ENCODE measurements at regions of chr4 and their contacts with region 1.

Region 1: GRCh38 chr4:38902695-38903094 is 35.1 kb downstream of the FAM114A1 start:
- DNase-seq: peak; percentile 52
- H3K4me3 ChIP-seq: no peak overlapping the region
- H3K27ac ChIP-seq: no peak overlapping the region
- H3K4me1 ChIP-seq: peaks cover 0 to 7% of the 10 kb centered on the region in 2 experiments; a peak in 2 of 4 replicates
- H3K27me3 ChIP-seq: no peaks in the 10 kb centered on the region
- CTCF ChIP-seq: peak; percentile 57
- EP300 ChIP-seq: no peak
- RAD21 ChIP-seq: peak; percentile 88

Region 2: DNA sequence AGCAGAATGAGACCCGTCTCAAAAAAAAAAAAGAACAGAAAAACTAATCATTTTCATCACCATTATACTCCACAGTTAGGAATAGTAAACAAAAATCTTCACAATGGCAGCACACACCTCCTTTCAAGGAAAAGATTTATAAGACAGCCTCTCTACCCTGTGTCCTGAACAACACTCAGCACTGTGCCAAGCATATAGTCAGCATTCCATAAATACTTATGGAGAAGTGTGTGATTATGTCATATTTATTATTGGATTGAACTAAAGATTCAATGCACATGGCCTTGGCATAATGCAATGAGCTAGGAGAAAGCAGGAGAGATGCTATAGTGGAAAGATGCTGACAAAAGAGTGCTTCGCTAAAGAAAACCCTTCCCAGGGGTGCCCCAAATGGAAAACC is 17.5 kb after region 1 on chr4:
- CTCF ChIA-PET with region 1: interaction called, 11 read pairs
- POLR2A ChIA-PET with region 1: no interaction called
- DNase-seq: no peak
- H3K4me3 ChIP-seq: no peak overlapping the region
- H3K27ac ChIP-seq: no peak overlapping the region
- H3K4me1 ChIP-seq: peaks cover 0 to 1% of the 10 kb centered on the region in 2 experiments; a peak in 1 of 4 replicates
- H3K27me3 ChIP-seq: no peaks in the 10 kb centered on the region
- CTCF ChIP-seq: no peak
- EP300 ChIP-seq: no peak
- RAD21 ChIP-seq: no peak

Region 3: GRCh38 chr4:39051454-39051853 is 148.8 kb after region 1 on chr4:
- CTCF ChIA-PET with region 1: interaction called, 14 read pairs
- POLR2A ChIA-PET with region 1: no interaction called
- DNase-seq: no peak
- H3K4me3 ChIP-seq: no peak overlapping the region
- H3K27ac ChIP-seq: no peak overlapping the region
- H3K4me1 ChIP-seq: peaks cover 2 to 23% of the 10 kb centered on the region in 2 experiments; a peak in 3 of 4 replicates
- H3K27me3 ChIP-seq: no peaks in the 10 kb centered on the region
- CTCF ChIP-seq: no peak
- EP300 ChIP-seq: no peak
- RAD21 ChIP-seq: no peak